HEK293 (cell line): ENCODE measurements at regions of chr5 and their contacts with region 1.

Region 1: DNA sequence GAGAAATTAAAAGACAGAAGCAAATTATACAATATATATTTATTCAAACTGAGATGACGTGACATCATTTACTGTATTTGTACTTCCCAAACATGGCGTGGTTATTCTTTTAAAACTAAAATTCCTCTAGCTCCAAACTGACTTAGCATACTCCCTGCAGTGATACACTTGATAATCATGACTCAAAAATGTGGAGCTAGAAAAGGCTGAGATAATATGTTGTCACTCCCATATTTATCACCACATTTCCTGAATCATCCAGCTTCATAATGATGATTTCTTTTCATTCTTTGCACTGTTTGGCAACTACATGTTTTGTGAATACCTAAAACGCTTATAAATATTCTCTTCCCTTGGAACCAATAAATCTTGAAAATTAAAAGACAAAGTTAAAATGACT is 341.0 kb downstream of the EBF1 start:
- H3K4me3 ChIP-seq: no peak overlapping the region
- H3K27ac ChIP-seq: no peak overlapping the region
- H3K4me1 ChIP-seq: 0 out of 2 replicates have a peak, but pooled peaks cover 2% of the 10 kb centered on the region
- CTCF ChIP-seq: no peak

Region 2: GRCh38 chr5:158573829-158574228 is 184.8 kb before region 1 on chr5:
- CTCF ChIA-PET with region 1: no interaction called
- POLR2A ChIA-PET with region 1: no interaction called
- H3K4me3 ChIP-seq: no peak overlapping the region
- H3K27ac ChIP-seq: no peak overlapping the region
- H3K4me1 ChIP-seq: no peaks in the 10 kb centered on the region
- CTCF ChIP-seq: no peak

Region 3: GRCh38 chr5:158695595-158696330 is 62.9 kb before region 1 on chr5:
- CTCF ChIA-PET with region 1: no interaction called
- POLR2A ChIA-PET with region 1: no interaction called
- H3K4me3 ChIP-seq: no peak overlapping the region
- H3K27ac ChIP-seq: no peak overlapping the region
- H3K4me1 ChIP-seq: peaks cover 14% of the 10 kb centered on the region
- CTCF ChIP-seq: peak; percentile 76

Region 4: DNA sequence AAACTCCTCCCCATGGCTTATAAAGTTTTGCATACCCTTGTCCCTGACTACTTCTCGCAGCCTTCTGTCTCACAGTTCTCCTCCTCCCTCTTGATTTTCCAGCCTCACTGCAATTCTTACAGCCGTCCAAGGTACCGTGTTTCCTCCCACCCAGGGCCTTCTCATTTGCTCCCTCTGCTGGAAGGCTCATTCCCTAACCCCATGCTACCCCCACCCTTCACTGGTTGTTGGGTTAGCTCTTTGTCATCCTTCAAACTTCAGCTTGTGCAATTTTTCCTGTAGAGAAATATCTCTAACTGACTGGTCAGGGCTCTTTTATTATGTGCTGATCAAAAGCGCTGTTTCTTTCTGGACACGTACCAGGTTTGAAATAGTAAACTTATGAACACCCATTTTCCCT is 11.8 kb after region 1 on chr5:
- CTCF ChIA-PET with region 1: interaction called, 15 read pairs
- POLR2A ChIA-PET with region 1: no interaction called
- H3K4me3 ChIP-seq: no peak overlapping the region
- H3K27ac ChIP-seq: no peak overlapping the region
- H3K4me1 ChIP-seq: no peaks in the 10 kb centered on the region
- CTCF ChIP-seq: peak; percentile 32; the same call in 1 of the 2 replicates